Activated CD4-positive, alpha-beta memory T cell treated with anti-CD3 and anti-CD28 coated beads for 36 hours (primary cell): ENCODE measurements at regions of chr14 and their contacts with region 1.

Region 1: GRCh38 chr14:61388173-61388975 is 67.0 kb downstream of the PRKCH start:
- DNase-seq: peak; percentile 64
- H3K4me3 Mint-ChIP-seq: no peak overlapping the region
- H3K27ac Mint-ChIP-seq: no peak overlapping the region
- H3K4me1 Mint-ChIP-seq: peaks cover 14% of the 10 kb centered on the region
- H3K27me3 Mint-ChIP-seq: no peaks in the 10 kb centered on the region

Region 2: DNA sequence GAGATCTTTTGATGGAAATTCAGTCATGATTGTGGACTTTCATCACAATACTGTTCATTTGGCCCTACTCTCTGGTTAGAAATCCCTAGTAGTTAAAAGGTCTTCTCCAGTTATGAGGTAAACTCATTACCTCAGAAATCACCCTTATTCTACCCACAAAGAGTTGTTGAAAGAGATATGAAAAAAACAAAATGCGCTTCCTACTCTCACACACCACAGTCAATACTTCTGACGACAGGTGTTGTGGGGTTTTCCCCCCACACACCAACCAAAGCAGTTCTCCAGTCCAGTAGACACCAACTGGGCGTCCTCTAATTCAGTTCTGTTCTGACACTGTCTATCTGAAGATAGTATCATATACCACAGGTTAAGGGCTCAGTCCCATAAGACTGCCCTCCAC is 462.4 kb before region 1 on chr14:
- CTCF ChIA-PET with region 1: no interaction called
- POLR2A ChIA-PET with region 1: no interaction called
- intact Hi-C with region 1: no loop called
- DNase-seq: no peak
- H3K4me3 Mint-ChIP-seq: no peak overlapping the region
- H3K27ac Mint-ChIP-seq: no peak overlapping the region
- H3K4me1 Mint-ChIP-seq: no peaks in the 10 kb centered on the region
- H3K27me3 Mint-ChIP-seq: no peaks in the 10 kb centered on the region

Region 3: GRCh38 chr14:60980811-60981632 is 407.4 kb before region 1 on chr14 and contains the starts of genes SLC38A6 and TRMT5:
- CTCF ChIA-PET with region 1: no interaction called
- POLR2A ChIA-PET with region 1: no interaction called
- intact Hi-C with region 1: loop called (anchors 5 kb)
- DNase-seq: peak; percentile 95
- H3K4me3 Mint-ChIP-seq: no peak within 1 kb of the TSS
- H3K27ac Mint-ChIP-seq: no peak within 1 kb of the TSS
- H3K4me1 Mint-ChIP-seq: peaks cover 21% of the 10 kb centered on the region
- H3K27me3 Mint-ChIP-seq: no peaks in the 10 kb centered on the region
- total RNA-seq, gene SLC38A6: 5.4 to 5.6 TPM
- total RNA-seq, gene TRMT5: 18.2 to 18.3 TPM

Region 4: DNA sequence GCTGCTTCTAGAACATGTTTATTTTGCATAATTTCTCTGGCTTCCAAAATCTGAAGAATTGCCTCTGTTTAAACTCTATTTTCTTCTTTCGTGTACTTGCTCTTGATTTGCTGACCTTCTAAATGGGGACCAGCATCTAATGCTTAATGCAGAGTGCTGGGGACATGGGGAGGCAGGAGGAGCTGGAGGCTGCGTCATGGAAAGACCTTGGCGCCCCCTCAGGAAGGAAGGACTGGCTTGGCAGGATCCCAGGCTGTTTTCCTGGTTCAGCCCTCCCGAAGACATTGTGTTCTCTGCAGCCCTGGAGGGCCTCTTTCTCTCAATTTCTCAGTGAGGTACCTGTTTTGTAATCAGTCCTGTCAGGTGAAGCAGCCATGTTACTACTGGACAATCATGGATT is 61.5 kb before region 1 on chr14:
- CTCF ChIA-PET with region 1: interaction called, 3 read pairs
- POLR2A ChIA-PET with region 1: interaction called, 12 read pairs
- intact Hi-C with region 1: loop called (anchors 1 kb)
- DNase-seq: no peak
- H3K4me3 Mint-ChIP-seq: peak overlapping the region; percentile 99
- H3K27ac Mint-ChIP-seq: peak overlapping the region; percentile 93
- H3K4me1 Mint-ChIP-seq: peaks cover 64% of the 10 kb centered on the region
- H3K27me3 Mint-ChIP-seq: no peaks in the 10 kb centered on the region

Region 5: DNA sequence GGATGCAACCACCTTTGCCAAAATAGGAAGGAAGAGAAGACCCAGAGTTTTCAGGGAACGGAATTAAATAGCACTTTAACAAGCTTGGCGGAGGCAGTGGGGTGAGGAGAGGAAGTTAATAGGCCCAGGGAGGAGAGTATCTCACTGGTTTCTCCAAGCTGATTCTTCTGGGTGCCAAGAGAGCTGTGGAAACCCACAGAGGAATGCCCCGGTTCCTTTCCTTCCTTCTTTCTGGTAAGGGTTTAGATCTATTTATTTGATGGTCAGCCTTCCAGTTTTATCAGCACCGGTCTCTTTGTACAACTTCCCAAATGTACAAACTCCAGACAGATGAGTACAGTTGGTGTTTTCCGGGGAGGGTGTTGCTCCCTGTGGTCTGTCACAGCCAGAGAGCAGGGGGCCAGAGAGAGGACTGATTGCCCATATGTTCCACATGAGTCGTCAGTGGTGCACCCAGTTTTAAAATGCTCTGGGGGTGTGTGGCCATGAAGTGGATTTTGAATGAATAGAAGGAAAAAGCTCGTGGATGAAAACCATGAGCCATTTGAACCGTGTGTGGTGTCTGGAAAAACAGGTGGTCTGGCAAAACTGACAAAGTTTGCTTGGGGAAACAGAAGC is 40.4 kb before region 1 on chr14:
- CTCF ChIA-PET with region 1: interaction called, 7 read pairs
- POLR2A ChIA-PET with region 1: interaction called, 12 read pairs
- intact Hi-C with region 1: loop called (anchors 1 kb)
- DNase-seq: peak; percentile 67
- H3K4me3 Mint-ChIP-seq: peak overlapping the region; percentile 82
- H3K27ac Mint-ChIP-seq: peak overlapping the region; percentile 98
- H3K4me1 Mint-ChIP-seq: peaks cover 98% of the 10 kb centered on the region
- H3K27me3 Mint-ChIP-seq: no peaks in the 10 kb centered on the region

Region 6: GRCh38 chr14:61399365-61399764 is 11.0 kb after region 1 on chr14:
- CTCF ChIA-PET with region 1: interaction called, 3 read pairs
- POLR2A ChIA-PET with region 1: interaction called, 6 read pairs
- intact Hi-C with region 1: loop called (anchors 1 kb)
- DNase-seq: no peak
- H3K4me3 Mint-ChIP-seq: no peak overlapping the region
- H3K27ac Mint-ChIP-seq: no peak overlapping the region
- H3K4me1 Mint-ChIP-seq: peaks cover 86% of the 10 kb centered on the region
- H3K27me3 Mint-ChIP-seq: no peaks in the 10 kb centered on the region

Region 7: DNA sequence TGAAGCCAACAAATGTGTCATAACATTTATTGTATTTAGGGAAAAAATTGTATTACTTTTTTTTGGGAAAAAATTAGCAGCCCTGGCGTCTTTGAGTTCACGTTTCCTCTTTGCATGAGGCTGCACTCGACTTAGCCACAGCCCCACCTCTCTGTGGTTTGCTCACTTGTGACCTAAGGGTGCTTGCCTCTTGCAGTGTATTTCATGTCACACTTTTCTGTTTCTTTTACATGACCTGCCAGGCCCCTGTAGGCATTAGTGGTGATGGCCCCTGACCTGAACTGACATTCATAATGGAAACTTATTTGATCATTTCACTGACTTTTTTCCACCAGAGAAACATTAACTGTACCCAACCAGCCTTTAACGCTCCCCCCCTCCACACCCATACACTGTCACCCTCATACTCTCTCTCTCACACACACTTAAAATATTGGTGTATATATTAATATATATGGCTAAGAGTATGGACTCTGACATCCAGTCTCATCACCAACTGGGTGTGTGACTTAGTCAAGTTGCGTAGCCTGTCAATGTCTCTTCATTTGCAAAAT is 55.9 kb after region 1 on chr14:
- CTCF ChIA-PET with region 1: no interaction called
- POLR2A ChIA-PET with region 1: no interaction called
- intact Hi-C with region 1: loop called (anchors 2 kb)
- DNase-seq: peak; percentile 88
- H3K4me3 Mint-ChIP-seq: peak overlapping the region; percentile 56
- H3K27ac Mint-ChIP-seq: peak overlapping the region; percentile 94
- H3K4me1 Mint-ChIP-seq: peaks cover 91% of the 10 kb centered on the region
- H3K27me3 Mint-ChIP-seq: no peaks in the 10 kb centered on the region

Region 8: GRCh38 chr14:61694830-61695694 is 306.7 kb after region 1 on chr14 and contains the start of gene HIF1A:
- CTCF ChIA-PET with region 1: no interaction called
- POLR2A ChIA-PET with region 1: interaction called, 6 read pairs
- intact Hi-C with region 1: loop called (anchors 5 kb)
- DNase-seq: peak; percentile 99
- H3K4me3 Mint-ChIP-seq: peak within 1 kb of the TSS; percentile 98
- H3K27ac Mint-ChIP-seq: peak within 1 kb of the TSS; percentile 98
- H3K4me1 Mint-ChIP-seq: peaks cover 49% of the 10 kb centered on the region
- H3K27me3 Mint-ChIP-seq: no peaks in the 10 kb centered on the region
- total RNA-seq, gene HIF1A: 283 to 287 TPM